ENCODE measurements at regions of chr5 and their contacts with region 1.

Region 1: GRCh38 chr5:135179308-135179980 is 145.4 kb upstream of the PITX1 start:
- DNase-seq: no peak
- H3K4me3 Mint-ChIP-seq: no peak overlapping the region
- H3K27ac Mint-ChIP-seq: no peak overlapping the region
- H3K4me1 Mint-ChIP-seq: no peaks in the 10 kb centered on the region
- H3K27me3 Mint-ChIP-seq: peaks cover 1% of the 10 kb centered on the region

Region 2: DNA sequence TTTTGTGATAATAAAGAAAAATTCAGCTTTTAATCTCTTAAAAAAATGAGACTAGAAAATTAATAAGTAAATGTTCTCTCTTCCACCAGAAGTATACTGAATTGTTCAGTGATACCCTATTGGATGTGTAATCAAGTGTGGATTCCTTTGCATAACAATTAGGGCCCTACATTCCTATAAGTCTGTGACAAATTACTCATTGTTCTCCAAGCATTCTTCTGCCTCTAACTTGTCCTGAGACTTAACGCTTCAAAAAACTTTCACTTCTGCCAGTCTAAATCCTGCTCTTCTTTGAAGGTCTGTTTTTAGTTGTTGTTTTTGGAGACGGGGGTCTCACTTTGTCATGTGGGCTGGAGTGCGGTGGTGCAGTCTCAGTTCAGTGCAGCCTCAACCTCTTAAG is 430.0 kb before region 1 on chr5:
- CTCF ChIA-PET with region 1: no interaction called
- POLR2A ChIA-PET with region 1: no interaction called
- DNase-seq: no peak
- H3K4me3 Mint-ChIP-seq: no peak overlapping the region
- H3K27ac Mint-ChIP-seq: no peak overlapping the region
- H3K4me1 Mint-ChIP-seq: peaks cover 3% of the 10 kb centered on the region
- H3K27me3 Mint-ChIP-seq: no peaks in the 10 kb centered on the region

Region 3: GRCh38 chr5:135191084-135191826 is 11.8 kb after region 1 on chr5:
- CTCF ChIA-PET with region 1: interaction called, 11 read pairs
- POLR2A ChIA-PET with region 1: no interaction called
- DNase-seq: peak; percentile 73
- H3K4me3 Mint-ChIP-seq: peak overlapping the region; percentile 47
- H3K27ac Mint-ChIP-seq: no peak overlapping the region
- H3K4me1 Mint-ChIP-seq: peaks cover 2% of the 10 kb centered on the region
- H3K27me3 Mint-ChIP-seq: peaks cover 65% of the 10 kb centered on the region